Activated T-helper 1 cell treated with anti-CD3 and anti-CD28 coated beads, Interleukin-12 subunit alpha, Interleukin-12 subunit beta, Interleukin-2, Interleukin-4 antibody, amounts not matched to agents 30 ng/mL and 10 ng/mL and 1 ng/mL, durations not matched to agents 14 hours and 24 hours and 36 hours (primary cell): ENCODE measurements at regions of chr2 and their contacts with region 1.

Region 1: GRCh38 chr2:215931256-215931903 is 82.0 kb downstream of the MREG start:
- DNase-seq: peak; percentile 27
- H3K4me3 Mint-ChIP-seq: no peak overlapping the region
- H3K27ac Mint-ChIP-seq: no peak overlapping the region
- H3K4me1 Mint-ChIP-seq: peaks cover 6% of the 10 kb centered on the region
- H3K27me3 Mint-ChIP-seq: peaks cover 8% of the 10 kb centered on the region

Region 2: DNA sequence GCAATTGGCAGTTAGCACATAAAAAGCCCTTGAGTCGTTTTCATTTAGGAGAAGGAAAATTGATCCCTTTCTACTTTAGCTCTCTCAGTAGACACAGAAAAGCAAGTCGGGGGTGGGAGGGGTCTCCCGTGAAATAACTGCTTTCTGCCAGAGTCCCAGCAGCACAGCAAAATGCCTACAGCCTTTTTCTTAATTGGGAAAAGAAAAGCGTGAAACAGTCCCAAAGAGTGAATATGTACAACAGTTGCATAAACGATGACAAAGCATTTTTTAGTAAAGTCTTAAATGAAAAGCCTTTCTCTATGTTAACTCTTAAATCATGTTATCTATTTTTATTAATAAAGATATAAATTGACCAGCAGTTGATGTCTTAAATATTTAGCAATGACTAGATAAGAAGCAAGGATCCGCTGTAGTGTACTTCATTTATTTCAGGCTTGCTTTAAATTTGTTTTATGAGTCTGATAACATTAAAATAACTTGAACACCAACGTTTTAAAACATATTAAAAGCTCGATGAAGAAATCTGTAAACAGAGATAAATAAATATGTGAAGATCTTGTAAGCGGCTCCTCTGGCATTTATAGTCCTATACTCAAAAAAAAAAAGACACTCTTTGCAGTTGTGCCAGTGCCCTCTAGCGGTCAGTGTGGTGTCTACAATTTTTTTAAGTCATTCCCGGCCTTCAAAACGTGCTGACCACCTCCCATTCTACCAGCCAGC is 661.8 kb before region 1 on chr2:
- intact Hi-C with region 1: loop called (anchors 5 kb)
- DNase-seq: peak; percentile 25
- H3K4me3 Mint-ChIP-seq: no peak overlapping the region
- H3K27ac Mint-ChIP-seq: no peak overlapping the region
- H3K4me1 Mint-ChIP-seq: peaks cover 7% of the 10 kb centered on the region
- H3K27me3 Mint-ChIP-seq: peaks cover 4% of the 10 kb centered on the region

Region 3: GRCh38 chr2:215454519-215455246 is 476.7 kb before region 1 on chr2:
- intact Hi-C with region 1: loop called (anchors 1 kb)
- DNase-seq: no peak
- H3K4me3 Mint-ChIP-seq: no peak overlapping the region
- H3K27ac Mint-ChIP-seq: no peak overlapping the region
- H3K4me1 Mint-ChIP-seq: no peaks in the 10 kb centered on the region
- H3K27me3 Mint-ChIP-seq: peaks cover 24% of the 10 kb centered on the region

Region 4: DNA sequence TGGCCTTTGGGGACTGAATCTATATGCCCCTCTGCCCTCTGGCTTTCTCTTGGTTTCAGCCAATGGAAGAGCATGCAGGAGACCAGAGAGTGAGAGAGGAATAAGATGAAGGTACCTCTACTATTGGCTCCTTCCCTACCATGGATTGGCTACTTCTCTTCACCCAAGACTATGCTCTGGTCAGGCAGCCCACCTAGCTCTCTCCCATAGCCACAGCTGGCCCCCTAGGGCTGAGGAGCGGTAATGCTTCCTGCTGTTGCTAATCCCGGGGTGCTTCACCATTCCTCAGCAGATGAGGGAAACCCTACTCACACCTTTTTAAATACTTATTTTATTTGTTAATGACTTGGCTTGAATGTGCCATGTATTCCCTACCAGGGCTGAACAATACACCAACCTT is 60.4 kb before region 1 on chr2:
- intact Hi-C with region 1: no loop called
- DNase-seq: no peak
- H3K4me3 Mint-ChIP-seq: no peak overlapping the region
- H3K27ac Mint-ChIP-seq: no peak overlapping the region
- H3K4me1 Mint-ChIP-seq: no peaks in the 10 kb centered on the region
- H3K27me3 Mint-ChIP-seq: peaks cover 8% of the 10 kb centered on the region

Region 5: GRCh38 chr2:215961981-215962380 is 30.6 kb after region 1 on chr2:
- intact Hi-C with region 1: no loop called
- DNase-seq: no peak
- H3K4me3 Mint-ChIP-seq: no peak overlapping the region
- H3K27ac Mint-ChIP-seq: no peak overlapping the region
- H3K4me1 Mint-ChIP-seq: peaks cover 15% of the 10 kb centered on the region
- H3K27me3 Mint-ChIP-seq: no peaks in the 10 kb centered on the region